ENCODE measurements at regions of chr1 and their contacts with region 1.

Region 1: GRCh38 chr1:161185282-161185682 is 8.0 kb upstream of the B4GALT3 start:
- DNase-seq: peak; percentile 74
- H3K4me3 Mint-ChIP-seq: peak overlapping the region; percentile 53
- H3K27ac Mint-ChIP-seq: peak overlapping the region; percentile 95
- H3K4me1 Mint-ChIP-seq: peaks cover 81% of the 10 kb centered on the region
- H3K27me3 Mint-ChIP-seq: no peaks in the 10 kb centered on the region

Region 2: GRCh38 chr1:160813215-160813614 is 372.1 kb before region 1 on chr1:
- intact Hi-C with region 1: no loop called
- DNase-seq: no peak
- H3K4me3 Mint-ChIP-seq: no peak overlapping the region
- H3K27ac Mint-ChIP-seq: peak overlapping the region; percentile 38
- H3K4me1 Mint-ChIP-seq: peaks cover 20% of the 10 kb centered on the region
- H3K27me3 Mint-ChIP-seq: peaks cover 6% of the 10 kb centered on the region

Region 3: GRCh38 chr1:161153679-161154426 is 31.4 kb before region 1 on chr1 and contains the start of gene UFC1:
- intact Hi-C with region 1: loop called (anchors 2 kb)
- DNase-seq: peak; percentile 80
- H3K4me3 Mint-ChIP-seq: peak within 1 kb of the TSS; percentile 99
- H3K27ac Mint-ChIP-seq: peak within 1 kb of the TSS; percentile 100
- H3K4me1 Mint-ChIP-seq: peaks cover 33% of the 10 kb centered on the region
- H3K27me3 Mint-ChIP-seq: no peaks in the 10 kb centered on the region
- total RNA-seq, gene UFC1: 86.3 and 94.5 TPM in 2 replicates

Region 4: GRCh38 chr1:161165742-161166668 is 19.3 kb before region 1 on chr1 and contains the start of gene PPOX:
- intact Hi-C with region 1: loop called (anchors 2 kb)
- DNase-seq: peak; percentile 95
- H3K4me3 Mint-ChIP-seq: peak within 1 kb of the TSS; percentile 87
- H3K27ac Mint-ChIP-seq: peak within 1 kb of the TSS; percentile 99
- H3K4me1 Mint-ChIP-seq: peaks cover 61% of the 10 kb centered on the region
- H3K27me3 Mint-ChIP-seq: no peaks in the 10 kb centered on the region
- total RNA-seq, gene PPOX: 25.1 and 26.0 TPM in 2 replicates

Region 5: GRCh38 chr1:161201828-161202725 is 16.8 kb after region 1 on chr1 and contains the start of gene NDUFS2:
- intact Hi-C with region 1: loop called (anchors 1 kb)
- DNase-seq: peak; percentile 93
- H3K4me3 Mint-ChIP-seq: peak within 1 kb of the TSS; percentile 96
- H3K27ac Mint-ChIP-seq: peak within 1 kb of the TSS; percentile 97
- H3K4me1 Mint-ChIP-seq: peaks cover 77% of the 10 kb centered on the region
- H3K27me3 Mint-ChIP-seq: no peaks in the 10 kb centered on the region
- total RNA-seq, gene NDUFS2: 72.9 and 84.1 TPM in 2 replicates

Region 6: GRCh38 chr1:161305867-161306519 is 120.7 kb after region 1 on chr1:
- intact Hi-C with region 1: loop called (anchors 2 kb)
- DNase-seq: peak; percentile 82
- H3K4me3 Mint-ChIP-seq: peak overlapping the region; percentile 99
- H3K27ac Mint-ChIP-seq: peak overlapping the region; percentile 94
- H3K4me1 Mint-ChIP-seq: peaks cover 52% of the 10 kb centered on the region
- H3K27me3 Mint-ChIP-seq: no peaks in the 10 kb centered on the region

Region 7: GRCh38 chr1:161389691-161390558 is 204.6 kb after region 1 on chr1:
- intact Hi-C with region 1: loop called (anchors 5 kb)
- DNase-seq: peak; percentile 91
- H3K4me3 Mint-ChIP-seq: peak overlapping the region; percentile 87
- H3K27ac Mint-ChIP-seq: peak overlapping the region; percentile 97
- H3K4me1 Mint-ChIP-seq: peaks cover 52% of the 10 kb centered on the region
- H3K27me3 Mint-ChIP-seq: no peaks in the 10 kb centered on the region

Measured in activated T-helper 1 cell treated with anti-CD3 and anti-CD28 coated beads, Interleukin-12 subunit alpha, Interleukin-12 subunit beta, Interleukin-2, Interleukin-4 antibody, amounts not matched to agents 30 ng/mL and 10 ng/mL and 1 ng/mL, durations not matched to agents 14 hours and 24 hours and 36 hours (primary cell).